Lower leg skin (tissue), 4 donors: ENCODE measurements at regions of chr10 and their contacts with region 1.

Region 1: GRCh38 chr10:95601116-95601719 is 40.0 kb upstream of the SORBS1 start:
- DNase-seq: peak; percentile 78 to 93
- H3K4me3 ChIP-seq: no peak overlapping the region
- CTCF ChIP-seq: peak in 1 of 3 donors; percentile 86
- POLR2A ChIP-seq: no peak

Region 2: GRCh38 chr10:95374597-95375209 is 226.5 kb before region 1 on chr10:
- intact Hi-C with region 1: loop called (anchors 5 kb)
- DNase-seq: peak; percentile 55 to 92
- H3K4me3 ChIP-seq: no peak overlapping the region
- CTCF ChIP-seq: peak in 1 of 3 donors; percentile 89
- POLR2A ChIP-seq: no peak

Region 3: GRCh38 chr10:95430231-95430951 is 170.8 kb before region 1 on chr10:
- intact Hi-C with region 1: loop called (anchors 2 kb)
- DNase-seq: no peak
- H3K4me3 ChIP-seq: no peak overlapping the region
- CTCF ChIP-seq: peak in 1 of 3 donors; percentile 83
- POLR2A ChIP-seq: no peak